OCI-LY7 (cell line): ENCODE measurements at regions of chr4 and their contacts with region 1.

Region 1: GRCh38 chr4:109486007-109486406 is 52.4 kb downstream of the SEC24B start:
- DNase-seq: no peak
- H3K4me3 ChIP-seq: no peak overlapping the region
- H3K27ac ChIP-seq: no peak overlapping the region
- H3K4me1 ChIP-seq: no peaks in the 10 kb centered on the region
- CTCF ChIP-seq: no peak

Region 2: GRCh38 chr4:109473824-109474223 is 12.2 kb before region 1 on chr4:
- CTCF ChIA-PET with region 1: no interaction called
- POLR2A ChIA-PET with region 1: interaction called, 18 read pairs
- intact Hi-C with region 1: no loop called
- DNase-seq: no peak
- H3K4me3 ChIP-seq: no peak overlapping the region
- H3K27ac ChIP-seq: no peak overlapping the region
- H3K4me1 ChIP-seq: no peaks in the 10 kb centered on the region
- CTCF ChIP-seq: no peak